Gastrocnemius medialis (tissue), 4 donors: ENCODE measurements at regions of chr11 and their contacts with region 1.

Region 1: DNA sequence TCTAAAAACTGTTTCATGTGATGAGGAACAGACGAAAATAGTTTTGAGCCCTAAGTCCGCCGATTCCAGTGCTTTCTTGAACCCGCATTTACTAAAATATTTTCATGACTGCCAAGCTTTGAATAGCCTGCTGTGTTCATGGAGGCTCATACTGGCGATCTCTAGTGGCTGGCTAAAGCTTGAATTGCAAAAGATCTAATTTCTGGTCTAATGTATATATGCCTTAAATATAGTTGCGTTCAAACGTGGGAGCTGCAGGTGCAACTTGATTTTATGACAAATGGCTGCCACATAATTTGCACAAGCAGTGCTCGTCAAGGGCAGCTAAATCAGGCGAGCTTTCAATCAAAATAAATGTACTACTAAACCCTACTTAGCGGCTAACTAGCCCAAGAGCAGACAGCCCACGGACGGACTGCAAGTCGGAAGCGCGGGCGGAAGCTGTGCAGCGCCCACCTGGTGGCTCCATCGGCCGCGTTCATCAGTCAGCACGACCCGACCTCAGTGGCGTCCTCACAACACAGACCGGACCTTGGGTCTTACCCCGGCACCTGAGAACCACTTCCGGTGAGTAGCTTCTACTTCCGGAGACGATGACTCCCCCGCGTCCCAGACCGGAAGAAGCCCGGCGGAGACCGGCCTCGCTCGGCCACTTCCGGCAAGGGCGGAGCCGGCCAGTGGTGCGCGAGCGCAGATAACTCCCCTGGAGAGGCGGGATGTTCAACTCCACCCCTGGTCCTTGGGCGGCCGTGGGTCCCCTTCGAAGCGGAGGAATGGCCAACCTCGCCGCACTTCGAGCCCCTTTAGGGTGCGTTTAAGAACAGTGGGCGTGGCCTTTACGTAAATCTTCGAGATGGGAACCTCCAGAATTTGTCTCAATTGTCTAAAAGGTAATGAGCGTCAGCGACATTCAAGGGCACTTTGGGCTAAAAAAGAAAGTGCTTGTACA is 6.1 kb downstream of the RPL27A start:
- DNase-seq: peak; percentile 92 to 95
- ATAC-seq: peak; percentile 98 to 99
- H3K4me3 ChIP-seq: peak overlapping the region; percentile 54 to 74 (median 70)
- H3K27ac ChIP-seq: peak overlapping the region; percentile 80 to 88 (median 86)
- H3K4me1 ChIP-seq: peaks cover 27 to 30% of the 10 kb centered on the region in 2 donors
- H3K27me3 ChIP-seq: no peaks in the 10 kb centered on the region
- CTCF ChIP-seq: peak; percentile 8 to 41 (median 15)
- POLR2A ChIP-seq: peak; percentile 55 to 57

Region 2: GRCh38 chr11:8558436-8558835 is 130.3 kb before region 1 on chr11:
- in situ Hi-C with region 1: no loop called
- intact Hi-C with region 1: no loop called
- DNase-seq: no peak
- ATAC-seq: no peak
- H3K4me3 ChIP-seq: no peak overlapping the region
- H3K27ac ChIP-seq: no peak overlapping the region
- H3K4me1 ChIP-seq: no peaks in the 10 kb centered on the region
- H3K27me3 ChIP-seq: no peaks in the 10 kb centered on the region
- CTCF ChIP-seq: no peak
- POLR2A ChIP-seq: no peak

Region 3: DNA sequence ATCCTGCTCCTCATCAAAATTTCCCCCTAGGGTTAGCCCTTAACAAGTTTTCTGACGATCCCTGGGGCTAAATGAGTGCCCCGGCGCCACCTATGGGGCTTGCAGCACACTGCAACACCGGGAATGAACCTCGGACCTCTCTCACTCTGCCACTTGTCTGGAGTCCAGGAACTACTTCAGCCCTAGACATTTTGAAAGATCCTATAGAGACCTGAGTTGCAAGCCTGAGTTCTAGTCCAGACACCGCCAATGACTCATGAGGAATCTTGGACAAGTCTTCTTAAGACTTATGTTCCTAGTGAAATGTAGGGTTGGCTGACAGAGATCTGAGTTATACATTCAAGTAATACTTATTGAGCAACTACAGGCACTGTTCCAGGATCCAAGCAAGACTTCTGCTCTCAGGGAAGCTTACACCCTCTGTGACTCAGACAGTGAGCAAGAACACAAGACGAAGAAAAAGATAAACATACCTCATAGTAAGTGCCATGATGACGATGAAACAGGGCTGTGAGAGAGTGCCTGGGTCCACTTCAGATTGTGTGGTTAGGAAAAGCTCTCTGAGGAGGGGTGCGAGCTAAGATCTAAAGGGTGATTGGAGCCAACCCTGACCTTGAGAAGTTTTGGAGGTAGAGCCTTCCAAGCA is 84.5 kb before region 1 on chr11:
- in situ Hi-C with region 1: no loop called
- intact Hi-C with region 1: no loop called
- DNase-seq: peak; percentile 18 to 23
- ATAC-seq: peak; percentile 86 to 89
- H3K4me3 ChIP-seq: no peak overlapping the region
- H3K27ac ChIP-seq: peak overlapping the region in 2 of 4 donors; percentile 33 to 35
- H3K4me1 ChIP-seq: no peaks in the 10 kb centered on the region
- H3K27me3 ChIP-seq: no peaks in the 10 kb centered on the region
- CTCF ChIP-seq: peak in 2 of 5 experiments; percentile 42 to 55
- POLR2A ChIP-seq: no peak

Region 4: DNA sequence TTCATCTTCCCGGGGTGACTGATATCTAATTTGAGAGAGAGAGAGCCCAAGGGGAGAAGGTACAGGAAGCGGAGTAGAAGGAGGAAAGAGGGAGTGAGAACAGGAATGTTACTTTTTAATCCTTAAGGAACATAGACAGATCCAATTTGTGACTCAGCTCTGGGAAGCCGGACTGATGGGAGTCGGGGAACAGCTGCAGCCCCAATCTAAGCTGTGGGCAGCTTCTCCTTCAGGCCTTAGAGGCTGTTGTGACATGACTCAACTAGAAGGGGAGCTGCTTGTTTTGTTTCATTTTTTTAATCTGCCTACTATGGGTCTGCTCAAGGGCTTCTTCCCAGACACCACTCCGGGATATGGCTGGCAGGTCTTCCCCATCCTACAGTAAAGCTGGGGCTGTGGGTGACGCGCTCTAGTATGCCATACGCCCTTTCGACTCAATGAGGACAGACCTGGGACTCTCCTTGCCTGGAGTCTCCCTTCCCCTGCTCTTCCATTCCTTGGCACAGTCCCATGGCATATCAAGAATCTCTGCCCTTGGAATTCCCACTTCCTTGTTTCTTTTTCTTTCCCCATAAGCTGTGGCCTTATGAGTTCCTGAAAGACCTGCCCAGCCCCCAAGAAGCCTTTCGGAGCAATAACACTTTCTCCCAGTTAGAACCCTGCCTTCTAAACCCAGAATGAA is 119.0 kb after region 1 on chr11:
- in situ Hi-C with region 1: loop called (anchors 5 to 25 kb)
- intact Hi-C with region 1: no loop called
- DNase-seq: peak; percentile 35 to 53
- ATAC-seq: peak; percentile 37 to 60
- H3K4me3 ChIP-seq: peak overlapping the region; percentile 30 to 67 (median 50)
- H3K27ac ChIP-seq: peak overlapping the region; percentile 78 to 84 (median 80)
- H3K4me1 ChIP-seq: peaks cover 49 to 57% of the 10 kb centered on the region in 2 donors
- H3K27me3 ChIP-seq: no peaks in the 10 kb centered on the region
- CTCF ChIP-seq: no peak
- POLR2A ChIP-seq: no peak

Region 5: DNA sequence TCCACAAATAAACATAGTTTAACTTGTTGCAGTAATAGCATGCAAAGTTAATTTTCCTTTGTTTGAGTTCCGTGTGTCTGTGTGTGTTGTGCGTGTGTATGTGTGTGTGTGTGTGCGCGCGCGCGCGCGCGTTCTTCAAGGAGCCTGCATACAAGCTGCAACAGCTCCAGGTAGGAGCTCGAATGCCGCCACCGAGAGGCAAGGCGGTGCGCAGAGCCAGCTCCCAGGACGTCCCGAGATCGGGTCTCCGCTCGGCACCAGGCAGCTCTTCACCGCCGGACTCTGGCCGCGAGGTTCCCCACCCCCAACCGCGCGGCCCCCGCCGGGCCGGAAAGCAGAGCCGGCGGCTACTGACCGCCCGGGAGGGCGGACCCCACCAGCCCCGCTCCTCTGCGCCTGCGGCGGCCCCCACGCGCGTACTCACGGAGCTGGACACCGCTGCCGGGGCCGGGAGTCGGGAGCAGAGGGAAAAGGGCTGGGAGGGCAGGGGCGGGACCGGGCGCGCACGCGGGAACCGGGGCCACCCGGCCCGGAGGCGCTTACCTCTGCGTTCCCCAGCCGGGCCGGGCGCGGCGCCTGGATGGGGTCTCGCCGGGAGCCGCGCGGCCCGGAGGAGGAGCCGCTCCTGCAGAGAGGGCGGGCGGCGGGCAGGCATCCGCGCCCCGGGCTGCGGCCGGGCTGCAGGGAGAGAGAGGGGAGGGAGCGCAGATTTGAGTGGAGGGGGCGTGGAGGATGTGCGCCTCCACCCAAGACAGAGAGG is 181.9 kb after region 1 on chr11:
- in situ Hi-C with region 1: no loop called
- intact Hi-C with region 1: loop called (anchors 5 kb)
- DNase-seq: no peak
- ATAC-seq: peak; percentile 39 to 49
- H3K4me3 ChIP-seq: peak overlapping the region; percentile 74 to 90 (median 78)
- H3K27ac ChIP-seq: peak overlapping the region; percentile 71 to 78 (median 76)
- H3K4me1 ChIP-seq: peaks cover 0 to 16% of the 10 kb centered on the region in 2 donors
- H3K27me3 ChIP-seq: no peaks in the 10 kb centered on the region
- CTCF ChIP-seq: no peak
- POLR2A ChIP-seq: no peak

Region 6: GRCh38 chr11:8964324-8965320 is 275.9 kb after region 1 on chr11 and contains the start of gene TMEM9B:
- in situ Hi-C with region 1: loop called in 2 of 4 experiments (anchors 10 to 25 kb)
- intact Hi-C with region 1: no loop called
- DNase-seq: peak; percentile 86 to 87
- ATAC-seq: peak; percentile 94 to 96
- H3K4me3 ChIP-seq: peak within 1 kb of the TSS; percentile 79 to 98 (median 84)
- H3K27ac ChIP-seq: peak within 1 kb of the TSS; percentile 96 to 97 (median 96)
- H3K4me1 ChIP-seq: peaks cover 22 to 24% of the 10 kb centered on the region in 2 donors
- H3K27me3 ChIP-seq: no peaks in the 10 kb centered on the region
- CTCF ChIP-seq: no peak
- POLR2A ChIP-seq: peak; percentile 91 to 96
- total RNA-seq, gene TMEM9B: 29.4 to 45.3 (median 40.1) TPM

Region 7: DNA sequence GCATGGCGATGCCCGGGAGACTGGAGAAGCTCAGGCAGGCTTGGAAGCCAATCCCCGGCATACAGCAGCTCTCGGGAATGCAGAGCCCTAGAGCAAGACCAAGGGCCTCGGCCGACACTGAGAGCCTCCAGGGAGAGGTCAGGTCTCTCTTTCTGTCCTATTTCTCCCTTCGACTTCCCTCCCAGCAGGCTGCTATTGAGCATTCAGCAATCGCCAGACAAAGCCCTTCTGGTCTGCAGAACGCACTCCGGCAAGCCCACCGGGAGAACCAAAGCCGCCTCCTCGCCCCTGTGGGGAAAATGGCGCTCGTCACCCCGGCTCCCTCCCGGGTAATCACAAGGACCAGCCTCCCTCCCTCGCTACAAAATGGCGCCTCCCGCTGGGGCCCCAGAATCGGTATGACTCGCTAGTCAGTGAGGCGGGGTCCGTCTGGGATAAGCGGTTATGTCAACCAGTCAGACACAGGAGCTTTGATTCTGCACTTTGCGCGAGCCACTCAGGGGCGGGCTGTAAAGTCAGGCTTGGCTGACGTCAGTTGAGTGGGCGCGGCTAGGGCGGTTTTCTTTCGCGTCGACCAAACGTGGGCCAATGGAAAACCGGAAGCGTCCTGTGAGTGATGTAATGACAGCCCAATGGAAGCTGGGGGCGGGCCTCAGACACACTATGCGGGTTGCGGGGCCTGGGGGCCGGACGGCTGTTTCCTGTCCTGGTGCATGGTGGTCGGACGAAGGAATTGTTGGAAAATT is 771.8 kb after region 1 on chr11 and contains the start of gene ZNF143:
- in situ Hi-C with region 1: no loop called
- intact Hi-C with region 1: loop called (anchors 5 kb)
- DNase-seq: peak; percentile 100
- ATAC-seq: peak; percentile 92 to 95
- H3K4me3 ChIP-seq: peak within 1 kb of the TSS; percentile 87 to 100 (median 96)
- H3K27ac ChIP-seq: peak within 1 kb of the TSS; percentile 98 to 100 (median 100)
- H3K4me1 ChIP-seq: peaks cover 20 to 27% of the 10 kb centered on the region in 2 donors
- H3K27me3 ChIP-seq: no peaks in the 10 kb centered on the region
- CTCF ChIP-seq: peak in 3 of 5 experiments; percentile 19 to 69 (median 42)
- POLR2A ChIP-seq: peak; percentile 88 to 94
- total RNA-seq, gene ZNF143: 33.3 to 42.6 (median 36.9) TPM